Calu3 (cell line): ENCODE measurements at regions of chrX and their contacts with region 1.

Region 1: DNA sequence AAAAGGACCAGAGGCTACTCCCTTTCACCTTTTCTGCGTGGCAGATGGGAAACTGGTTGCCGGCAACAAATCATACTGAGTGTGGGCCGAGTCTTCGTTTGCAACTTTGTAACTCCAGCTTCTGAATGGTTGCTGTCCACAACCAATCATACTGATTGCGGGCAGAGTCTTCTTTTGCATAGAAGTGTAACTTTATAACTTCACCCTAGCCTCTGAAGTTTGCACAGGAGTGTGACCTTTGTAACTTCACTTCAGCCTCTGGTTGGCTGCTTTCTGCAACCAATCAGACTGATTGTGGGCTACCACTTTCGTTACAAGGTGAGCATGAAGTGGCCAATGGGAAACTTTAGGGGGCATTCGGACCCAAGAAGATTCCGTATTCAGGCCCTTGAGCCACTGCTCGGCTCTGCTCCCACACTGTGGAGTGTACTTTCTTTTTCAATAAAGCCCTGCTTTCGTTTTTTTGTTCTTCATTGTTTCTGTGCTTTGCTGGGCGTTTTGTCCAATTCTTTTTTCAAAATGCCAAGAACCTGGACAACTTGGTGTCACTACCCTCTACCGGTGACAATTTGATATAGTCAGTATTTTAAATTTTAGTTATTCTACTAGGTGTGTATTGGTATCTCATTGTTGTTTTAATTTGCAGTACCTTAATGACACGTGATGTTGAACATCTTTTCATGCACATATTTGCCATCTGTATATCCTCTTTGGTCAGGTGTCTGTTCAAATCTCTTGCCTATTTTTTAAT is 9.0 kb upstream of the PAGE5 start:
- DNase-seq: peak; percentile 1
- H3K4me3 Mint-ChIP-seq: peak overlapping the region; percentile 60
- H3K27ac Mint-ChIP-seq: no peak overlapping the region
- H3K4me1 Mint-ChIP-seq: no peaks in the 10 kb centered on the region
- H3K27me3 Mint-ChIP-seq: no peaks in the 10 kb centered on the region
- CTCF ChIP-seq: no peak

Region 2: DNA sequence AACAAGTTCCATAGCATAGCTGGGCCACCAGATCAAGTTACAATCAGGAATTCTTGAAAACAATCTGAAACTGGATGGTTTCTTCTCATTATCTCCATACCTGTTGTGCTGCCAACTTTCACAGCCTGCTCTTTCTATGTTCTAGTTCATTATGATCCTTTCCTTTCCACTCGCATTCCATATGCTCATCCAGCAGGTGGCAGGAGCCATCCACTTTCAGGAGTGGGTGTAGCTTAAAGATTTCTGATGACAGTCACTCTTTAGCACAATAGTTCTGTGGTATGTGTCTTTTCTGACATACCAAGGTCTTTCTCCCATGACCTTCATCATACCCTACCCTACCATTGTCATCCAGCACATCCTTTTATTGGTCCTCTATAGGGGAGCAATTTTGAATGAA is 75.9 kb before region 1 on chrX:
- CTCF ChIA-PET with region 1: no interaction called
- intact Hi-C with region 1: loop called (anchors 1 kb)
- DNase-seq: peak; percentile 49
- H3K4me3 Mint-ChIP-seq: no peak overlapping the region
- H3K27ac Mint-ChIP-seq: no peak overlapping the region
- H3K4me1 Mint-ChIP-seq: no peaks in the 10 kb centered on the region
- H3K27me3 Mint-ChIP-seq: peaks cover 20% of the 10 kb centered on the region
- CTCF ChIP-seq: peak; percentile 41

Region 3: GRCh38 chrX:55240788-55241340 is 29.8 kb after region 1 on chrX:
- CTCF ChIA-PET with region 1: no interaction called
- intact Hi-C with region 1: no loop called
- DNase-seq: no peak
- H3K4me3 Mint-ChIP-seq: no peak overlapping the region
- H3K27ac Mint-ChIP-seq: no peak overlapping the region
- H3K4me1 Mint-ChIP-seq: no peaks in the 10 kb centered on the region
- H3K27me3 Mint-ChIP-seq: no peaks in the 10 kb centered on the region
- CTCF ChIP-seq: no peak